Transverse colon (tissue), 4 donors: ENCODE measurements at regions of chr2 and their contacts with region 1.

Region 1: GRCh38 chr2:206336861-206337260 is 62.4 kb downstream of the ZDBF2 start:
- DNase-seq: no peak
- H3K4me3 ChIP-seq: no peak overlapping the region
- H3K27ac ChIP-seq: no peak overlapping the region
- H3K4me1 ChIP-seq: no peaks in the 10 kb centered on the region
- H3K27me3 ChIP-seq: no peaks in the 10 kb centered on the region
- CTCF ChIP-seq: no peak
- EP300 ChIP-seq: no peak
- POLR2A ChIP-seq: no peak

Region 2: GRCh38 chr2:205629027-205629817 is 707.6 kb before region 1 on chr2:
- in situ Hi-C with region 1: no loop called
- intact Hi-C with region 1: no loop called
- DNase-seq: no peak
- H3K4me3 ChIP-seq: no peak overlapping the region
- H3K27ac ChIP-seq: no peak overlapping the region
- H3K4me1 ChIP-seq: no peaks in the 10 kb centered on the region
- H3K27me3 ChIP-seq: no peaks in the 10 kb centered on the region
- CTCF ChIP-seq: no peak
- EP300 ChIP-seq: no peak
- POLR2A ChIP-seq: no peak

Region 3: GRCh38 chr2:206627632-206628031 is 290.8 kb after region 1 on chr2:
- in situ Hi-C with region 1: no loop called
- intact Hi-C with region 1: loop called (anchors 5 kb)
- DNase-seq: no peak
- H3K4me3 ChIP-seq: no peak overlapping the region
- H3K27ac ChIP-seq: no peak overlapping the region
- H3K4me1 ChIP-seq: no peaks in the 10 kb centered on the region
- H3K27me3 ChIP-seq: no peaks in the 10 kb centered on the region
- CTCF ChIP-seq: no peak
- EP300 ChIP-seq: no peak
- POLR2A ChIP-seq: no peak

Region 4: DNA sequence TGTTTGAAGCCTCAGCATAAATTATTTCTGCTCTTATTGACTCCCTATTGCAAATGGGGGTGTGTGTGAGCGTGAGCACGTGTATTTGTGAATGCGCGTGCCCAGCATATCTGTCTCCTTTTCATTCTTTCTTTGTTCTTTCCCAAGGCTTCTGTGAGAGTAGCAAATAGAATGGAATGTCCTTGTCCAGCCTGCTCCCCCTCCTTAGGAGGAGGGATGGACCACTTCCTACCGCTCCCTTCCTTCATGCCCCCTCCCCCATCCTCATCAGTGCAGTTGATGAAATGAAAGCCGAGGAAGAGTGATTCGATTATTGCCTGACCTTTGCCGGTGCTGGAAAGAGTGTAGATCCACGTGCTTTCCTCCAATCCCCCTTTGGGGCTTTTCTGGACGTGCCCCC is 704.4 kb after region 1 on chr2:
- in situ Hi-C with region 1: no loop called
- intact Hi-C with region 1: no loop called
- DNase-seq: no peak
- H3K4me3 ChIP-seq: no peak overlapping the region
- H3K27ac ChIP-seq: no peak overlapping the region
- H3K4me1 ChIP-seq: no peaks in the 10 kb centered on the region
- H3K27me3 ChIP-seq: no peaks in the 10 kb centered on the region
- CTCF ChIP-seq: no peak
- EP300 ChIP-seq: no peak
- POLR2A ChIP-seq: no peak